ENCODE measurements at regions of chr20 and their contacts with region 1.

Region 1: GRCh38 chr20:41604010-41604409 is 14.2 kb downstream of the CHD6 start:
- DNase-seq: no peak
- ATAC-seq: no peak

Region 2: GRCh38 chr20:41428285-41428684 is 175.7 kb before region 1 on chr20:
- intact Hi-C with region 1: no loop called
- DNase-seq: no peak
- ATAC-seq: no peak

Region 3: GRCh38 chr20:41524980-41525613 is 78.9 kb before region 1 on chr20:
- intact Hi-C with region 1: loop called (anchors 5 kb)
- DNase-seq: peak; percentile 78
- ATAC-seq: peak; percentile 86

Region 4: DNA sequence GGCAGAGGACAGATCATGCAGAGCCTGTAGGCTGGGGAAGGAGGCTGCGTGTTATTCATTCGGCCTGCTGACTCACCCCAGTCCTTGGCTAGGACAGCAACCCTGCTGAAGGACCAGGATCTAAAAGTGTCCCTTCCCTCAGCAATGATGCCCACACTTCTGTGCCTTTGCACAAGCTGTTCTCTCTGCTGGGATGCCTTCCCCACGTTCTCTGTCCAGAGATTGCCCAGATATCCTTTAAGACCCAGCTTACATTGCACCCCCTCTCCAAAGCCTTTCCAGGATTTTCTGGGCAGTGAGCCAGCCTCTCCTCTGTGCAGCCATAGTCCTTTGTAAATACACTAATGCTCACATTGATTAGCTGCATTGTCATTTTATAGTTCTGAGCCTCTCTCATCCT is 113.5 kb after region 1 on chr20:
- intact Hi-C with region 1: no loop called
- DNase-seq: no peak
- ATAC-seq: no peak

Region 5: GRCh38 chr20:42189878-42190476 is 586.0 kb after region 1 on chr20:
- intact Hi-C with region 1: no loop called
- DNase-seq: no peak
- ATAC-seq: no peak

Measured in Right ventricle myocardium inferior (tissue), 1 donor.